Activated CD8-positive, alpha-beta memory T cell treated with anti-CD3 and anti-CD28 coated beads, Interleukin-2, amount 10 ng/mL, durations not matched to agents 7 days and 5 days (primary cell): ENCODE measurements at regions of chr17 and their contacts with region 1.

Region 1: GRCh38 chr17:58200017-58200633 is 7.6 kb downstream of the EPX start:
- DNase-seq: peak; percentile 62
- ATAC-seq: peak; percentile 83
- H3K4me3 Mint-ChIP-seq: no peak overlapping the region
- H3K27ac Mint-ChIP-seq: no peak overlapping the region
- H3K4me1 Mint-ChIP-seq: no peaks in the 10 kb centered on the region
- H3K27me3 Mint-ChIP-seq: peaks cover 25% of the 10 kb centered on the region

Region 2: DNA sequence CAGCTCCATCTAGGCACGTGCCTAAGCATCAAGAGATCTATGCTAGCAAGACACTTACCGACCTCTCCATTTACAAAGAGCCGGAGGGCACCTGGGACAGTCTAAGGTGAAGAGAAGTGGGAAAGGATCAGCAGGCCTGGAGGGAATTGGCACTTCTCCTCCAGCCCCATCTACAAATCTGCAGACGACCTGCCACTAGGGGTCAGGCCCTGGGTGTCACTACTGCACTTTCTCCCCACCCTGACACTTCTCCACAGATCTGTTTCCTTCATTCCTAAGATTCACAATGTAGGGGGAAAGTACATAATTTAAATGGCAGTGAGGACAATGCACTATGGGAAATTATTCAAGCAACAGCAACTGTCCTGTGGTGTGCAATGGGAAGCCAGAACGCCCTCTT is 10.8 kb after region 1 on chr17:
- CTCF ChIA-PET with region 1: interaction called, 17 read pairs
- DNase-seq: no peak
- ATAC-seq: no peak
- H3K4me3 Mint-ChIP-seq: no peak overlapping the region
- H3K27ac Mint-ChIP-seq: no peak overlapping the region
- H3K4me1 Mint-ChIP-seq: peaks cover 4% of the 10 kb centered on the region
- H3K27me3 Mint-ChIP-seq: no peaks in the 10 kb centered on the region

Region 3: DNA sequence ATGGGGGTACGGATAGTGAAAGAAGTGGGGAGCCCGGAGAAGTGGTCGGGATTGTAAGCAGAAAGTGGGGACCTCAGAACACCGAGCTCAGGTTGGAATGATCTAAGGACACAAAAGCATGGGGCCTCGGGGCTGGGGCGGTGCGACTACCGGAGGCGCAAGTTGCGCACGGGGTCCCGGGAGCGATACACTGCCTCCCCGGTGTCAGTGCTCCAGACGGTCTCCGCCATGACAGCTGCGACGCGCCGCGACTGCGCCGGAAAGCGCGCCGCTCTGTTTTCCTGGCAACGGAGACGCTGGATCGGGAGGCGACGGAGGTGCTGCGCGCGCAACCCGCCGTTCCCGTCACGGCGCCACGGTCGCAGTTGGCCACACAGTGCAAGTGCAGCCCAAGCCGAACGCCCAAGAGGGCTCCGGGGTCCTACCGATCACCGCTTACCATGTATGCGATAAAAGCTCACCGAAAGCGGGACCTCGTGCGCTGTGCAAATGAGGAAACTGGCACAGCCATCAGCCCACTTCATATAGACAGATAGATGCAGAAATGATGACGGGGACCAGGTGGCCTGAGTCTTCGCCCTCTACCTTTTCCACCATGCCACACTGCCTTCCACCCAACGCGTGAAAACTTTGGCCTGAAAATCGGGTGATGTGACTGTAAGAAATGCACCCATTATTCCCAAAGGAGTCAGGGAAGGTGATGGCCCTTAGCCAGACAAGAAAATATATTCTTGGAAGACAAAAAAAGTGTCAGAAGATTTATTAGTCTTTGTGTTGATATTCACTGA is 19.1 kb after region 1 on chr17 and contains the start of gene MKS1:
- CTCF ChIA-PET with region 1: interaction called, 17 read pairs
- DNase-seq: peak; percentile 97
- ATAC-seq: peak; percentile 99
- H3K4me3 Mint-ChIP-seq: peak within 1 kb of the TSS; percentile 89
- H3K27ac Mint-ChIP-seq: peak within 1 kb of the TSS; percentile 83
- H3K4me1 Mint-ChIP-seq: peaks cover 24% of the 10 kb centered on the region
- H3K27me3 Mint-ChIP-seq: peaks cover 5% of the 10 kb centered on the region
- total RNA-seq, gene MKS1: 17.8 to 18.2 TPM